Ascending aorta (tissue), 2 donors: ENCODE measurements at regions of chr9 and their contacts with region 1.

Region 1: DNA sequence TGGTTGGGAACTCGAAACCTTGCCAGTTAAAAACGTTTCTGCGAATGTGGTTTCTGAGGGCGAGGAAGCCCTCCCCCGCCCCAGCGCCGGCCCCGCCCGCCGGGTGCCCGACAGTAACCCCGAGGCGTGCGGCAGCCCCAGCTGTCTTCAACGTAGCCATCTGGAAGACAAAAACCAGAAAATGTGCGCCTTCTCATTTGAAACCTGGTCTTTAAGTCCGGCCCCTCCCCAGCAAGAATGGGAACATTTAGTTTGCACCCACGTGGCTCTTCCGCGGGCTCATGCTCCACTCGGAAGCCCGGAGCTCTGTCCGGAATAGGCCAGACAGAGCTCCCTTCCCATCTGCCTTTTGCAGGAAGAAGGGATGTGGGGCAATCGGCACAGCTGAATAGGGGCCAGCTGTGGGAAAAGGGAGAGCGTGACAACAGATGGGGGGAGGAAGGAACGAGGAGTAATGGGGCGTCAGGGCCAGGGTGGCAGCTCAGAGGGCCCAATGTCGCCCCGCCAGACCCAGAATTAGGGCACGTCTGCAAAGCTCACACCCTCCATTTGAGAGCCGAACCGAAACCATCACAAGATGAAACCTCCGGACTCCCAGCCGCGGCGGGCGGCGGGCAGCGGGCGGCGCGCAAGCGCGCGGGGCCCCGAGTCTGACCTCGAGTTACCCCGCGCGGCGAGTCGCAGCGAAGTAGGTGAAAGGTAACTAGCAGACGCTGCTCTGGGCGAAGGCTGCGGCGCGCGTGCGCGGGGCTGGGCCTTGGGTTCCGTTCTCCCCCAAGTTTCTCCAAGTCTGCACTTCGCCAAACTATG is 63.4 kb upstream of the ABCA1 start:
- DNase-seq: peak; percentile 73 to 95
- H3K4me3 ChIP-seq: peak overlapping the region; percentile 66 to 67
- H3K27ac ChIP-seq: peak overlapping the region; percentile 86 to 96
- H3K4me1 ChIP-seq: peaks cover 9 to 21% of the 10 kb centered on the region in 2 donors
- H3K27me3 ChIP-seq: no peaks in the 10 kb centered on the region
- CTCF ChIP-seq: no peak

Region 2: DNA sequence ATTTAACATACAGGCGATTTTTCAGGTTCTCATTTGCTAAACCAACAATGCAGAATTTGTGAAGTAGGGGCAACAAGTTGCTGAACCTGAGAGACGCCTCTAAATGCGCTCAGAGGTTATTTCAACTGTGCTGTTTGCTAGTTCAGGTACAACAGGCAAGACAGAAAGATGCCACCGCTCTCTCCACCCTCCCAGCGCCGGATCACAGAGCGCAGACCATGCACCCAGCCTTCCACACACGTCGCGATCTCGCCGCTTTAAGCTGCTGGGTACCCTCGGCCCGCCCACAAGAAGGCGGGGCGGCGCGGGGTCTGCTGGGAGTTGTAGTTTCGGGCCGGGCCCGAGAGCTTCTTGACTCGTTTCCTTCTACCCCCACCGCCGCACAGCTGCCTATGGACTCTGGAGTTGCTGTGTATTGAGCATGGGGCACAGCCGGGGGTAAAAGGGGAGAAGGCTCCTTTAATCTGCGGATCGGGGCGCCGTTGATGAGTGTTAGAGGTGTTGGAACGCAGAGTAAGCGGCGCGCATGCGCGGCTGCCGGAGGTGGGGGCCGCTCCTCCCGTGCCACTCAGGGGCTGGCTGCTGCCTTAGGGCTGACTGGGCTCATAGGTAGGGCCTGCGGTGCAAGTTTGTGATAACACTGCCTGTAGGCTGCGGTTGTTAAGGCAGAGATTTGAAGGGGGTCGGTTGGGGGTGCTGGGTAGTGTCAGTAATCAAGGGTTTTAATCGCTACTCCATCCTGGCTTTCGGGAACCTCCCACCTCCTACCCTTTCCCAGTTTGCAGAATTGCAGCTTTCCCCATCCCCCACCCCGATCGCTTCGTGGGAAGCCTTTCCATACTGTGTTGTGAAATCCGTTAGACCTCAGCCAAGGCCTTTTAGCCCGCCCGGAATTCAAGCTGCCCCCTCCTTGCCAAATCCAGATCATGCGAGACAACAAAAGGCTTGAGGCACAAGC is 23.0 kb before region 1 on chr9:
- intact Hi-C with region 1: loop called (anchors 1 kb)
- DNase-seq: peak; percentile 41 to 95
- H3K4me3 ChIP-seq: peak overlapping the region; percentile 69 to 78
- H3K27ac ChIP-seq: peak overlapping the region; percentile 86 to 94
- H3K4me1 ChIP-seq: peaks cover 0 to 4% of the 10 kb centered on the region in 2 donors
- H3K27me3 ChIP-seq: no peaks in the 10 kb centered on the region
- CTCF ChIP-seq: no peak

Region 3: GRCh38 chr9:105064315-105065097 is 73.2 kb after region 1 on chr9:
- intact Hi-C with region 1: loop called (anchors 2 kb)
- DNase-seq: peak; percentile 67 to 90
- H3K4me3 ChIP-seq: no peak overlapping the region
- H3K27ac ChIP-seq: peak overlapping the region; percentile 88 to 92
- H3K4me1 ChIP-seq: peaks cover 11 to 16% of the 10 kb centered on the region in 2 donors
- H3K27me3 ChIP-seq: no peaks in the 10 kb centered on the region
- CTCF ChIP-seq: no peak

Region 4: DNA sequence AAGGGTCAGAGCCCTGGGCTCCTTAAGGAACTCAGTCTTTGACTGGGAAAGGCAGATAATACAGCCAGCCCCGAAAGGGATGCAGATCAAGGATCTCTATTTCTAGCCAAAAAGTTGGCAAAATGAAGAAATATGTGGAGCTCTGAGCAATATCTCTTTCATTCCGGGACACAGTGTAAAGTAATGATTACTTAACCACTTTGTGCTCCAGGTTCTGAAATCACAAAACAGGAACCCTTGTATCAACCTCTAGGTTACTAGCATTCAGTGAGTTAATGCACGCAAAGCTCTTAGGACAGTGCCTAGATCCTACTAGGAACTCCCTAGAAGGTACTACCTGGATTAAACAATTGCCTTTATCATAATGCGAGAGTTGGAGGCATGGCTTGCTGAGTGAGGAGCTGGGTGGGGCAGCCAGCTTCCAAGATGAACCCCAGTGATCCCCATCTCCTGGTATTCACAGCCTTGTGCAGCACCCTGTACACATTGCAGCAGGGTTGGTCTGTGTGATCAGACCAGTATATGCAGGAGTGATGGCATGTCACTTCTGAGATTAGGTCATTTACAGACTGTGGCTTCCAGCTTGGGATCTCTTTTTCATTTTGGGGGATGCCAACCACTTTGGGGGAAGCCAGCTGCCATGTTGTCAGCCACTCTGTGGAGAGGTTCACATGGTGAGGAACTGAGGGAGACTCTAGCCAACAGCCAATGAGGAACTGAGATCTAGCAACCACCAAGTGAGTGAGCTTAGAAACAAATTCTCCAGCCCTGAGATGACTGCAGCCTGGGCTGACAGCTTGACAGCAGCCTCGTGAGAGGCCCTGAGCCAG is 150.0 kb after region 1 on chr9:
- intact Hi-C with region 1: no loop called
- DNase-seq: peak in 1 of 2 donors; percentile 43
- H3K4me3 ChIP-seq: no peak overlapping the region
- H3K27ac ChIP-seq: no peak overlapping the region
- H3K4me1 ChIP-seq: peaks cover 0 to 4% of the 10 kb centered on the region in 2 donors
- H3K27me3 ChIP-seq: no peaks in the 10 kb centered on the region
- CTCF ChIP-seq: no peak

Region 5: DNA sequence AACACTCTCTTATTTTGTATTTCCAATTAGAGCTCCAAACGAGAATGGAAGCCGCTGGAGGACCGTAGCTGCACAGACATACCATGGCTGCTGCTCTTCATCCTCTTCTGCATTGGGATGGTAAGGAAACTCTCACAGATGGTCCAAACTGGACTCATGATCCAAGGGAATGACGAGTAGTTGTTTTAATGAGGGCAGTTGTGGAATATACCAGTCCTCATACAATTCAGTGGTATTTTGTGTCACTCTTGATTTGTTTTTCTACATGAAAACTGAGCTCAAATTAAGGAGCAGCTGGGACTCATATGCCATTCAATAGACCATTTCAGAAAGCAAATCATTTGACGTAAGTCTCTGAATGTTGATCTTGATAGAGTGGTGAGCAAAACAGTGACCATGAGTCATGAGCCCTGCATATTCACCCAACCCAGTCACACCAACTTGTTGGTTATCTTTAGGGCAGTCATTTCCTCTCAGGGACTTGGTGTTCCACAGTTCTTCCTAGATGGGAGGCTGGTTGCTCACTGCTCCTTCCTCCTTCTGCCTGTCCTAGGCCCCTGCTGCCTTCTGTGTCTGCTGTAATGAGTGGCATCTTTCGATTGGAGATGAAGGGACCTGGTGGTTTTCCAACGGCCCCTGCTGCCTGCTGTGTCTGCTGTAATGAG is 308.0 kb after region 1 on chr9:
- intact Hi-C with region 1: loop called (anchors 5 kb)
- DNase-seq: peak; percentile 13 to 71
- H3K4me3 ChIP-seq: no peak overlapping the region
- H3K27ac ChIP-seq: peak overlapping the region; percentile 76 to 79
- H3K4me1 ChIP-seq: peaks cover 9 to 30% of the 10 kb centered on the region in 2 donors
- H3K27me3 ChIP-seq: no peaks in the 10 kb centered on the region
- CTCF ChIP-seq: no peak